ENCODE measurements at regions of chr16 and their contacts with region 1.

Region 1: DNA sequence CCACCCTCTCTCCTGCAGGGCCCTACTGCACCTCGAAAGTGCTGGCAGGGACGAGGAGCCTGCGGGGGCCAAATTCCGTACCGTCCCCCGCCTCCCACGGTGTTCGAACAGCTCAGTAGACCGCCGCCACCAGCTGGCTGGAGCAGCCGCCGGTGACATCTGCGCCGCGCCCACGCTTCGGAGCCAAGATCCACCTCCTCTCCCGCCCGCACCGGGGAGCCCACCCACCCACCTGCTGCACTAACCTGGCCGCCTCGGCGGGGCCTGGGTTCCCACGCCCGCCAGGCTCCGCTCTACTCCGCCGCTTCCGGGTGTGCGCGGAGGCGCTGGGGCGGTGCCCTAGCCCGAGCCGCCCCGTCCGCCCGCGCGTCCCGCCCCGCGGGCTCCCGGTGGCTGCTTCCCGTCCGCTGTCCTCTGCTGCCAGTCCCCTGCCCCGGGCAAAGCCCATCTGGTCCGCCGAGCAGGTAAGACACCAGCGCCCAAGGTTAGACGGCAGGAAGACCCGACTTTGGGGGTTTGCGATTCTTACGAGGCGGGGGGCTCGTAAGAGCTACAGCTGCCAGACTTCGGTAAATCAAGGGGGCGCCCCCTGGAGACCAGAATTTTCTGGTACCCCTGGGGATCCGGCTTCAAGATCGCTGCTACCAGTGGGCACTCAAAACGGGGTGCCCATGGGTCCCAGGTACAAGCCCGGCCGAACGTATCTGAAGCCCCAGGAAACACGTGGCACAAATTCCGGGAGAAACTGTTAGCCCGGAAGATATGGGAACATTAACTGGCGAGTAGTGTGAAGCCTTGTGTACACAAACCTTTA is at the starts of genes FBXL8 and TRADD:
- DNase-seq: peak; percentile 91
- ATAC-seq: peak; percentile 66
- H3K4me3 Mint-ChIP-seq: peak within 1 kb of the TSS; percentile 93
- H3K27ac Mint-ChIP-seq: peak within 1 kb of the TSS; percentile 92
- H3K4me1 Mint-ChIP-seq: peaks cover 44% of the 10 kb centered on the region
- H3K27me3 Mint-ChIP-seq: peaks cover 23% of the 10 kb centered on the region
- total RNA-seq, gene FBXL8: 34.1 to 41.3 TPM
- total RNA-seq, gene TRADD: 77.3 to 81.7 TPM

Region 2: GRCh38 chr16:67028555-67029248 is 131.1 kb before region 1 on chr16 and contains the start of gene CBFB:
- POLR2A ChIA-PET with region 1: interaction called, 23 read pairs
- DNase-seq: peak; percentile 97
- ATAC-seq: peak; percentile 93
- H3K4me3 Mint-ChIP-seq: peak within 1 kb of the TSS; percentile 88
- H3K27ac Mint-ChIP-seq: peak within 1 kb of the TSS; percentile 92
- H3K4me1 Mint-ChIP-seq: peaks cover 44% of the 10 kb centered on the region
- H3K27me3 Mint-ChIP-seq: no peaks in the 10 kb centered on the region
- total RNA-seq, gene CBFB: 193 to 198 TPM

Region 3: DNA sequence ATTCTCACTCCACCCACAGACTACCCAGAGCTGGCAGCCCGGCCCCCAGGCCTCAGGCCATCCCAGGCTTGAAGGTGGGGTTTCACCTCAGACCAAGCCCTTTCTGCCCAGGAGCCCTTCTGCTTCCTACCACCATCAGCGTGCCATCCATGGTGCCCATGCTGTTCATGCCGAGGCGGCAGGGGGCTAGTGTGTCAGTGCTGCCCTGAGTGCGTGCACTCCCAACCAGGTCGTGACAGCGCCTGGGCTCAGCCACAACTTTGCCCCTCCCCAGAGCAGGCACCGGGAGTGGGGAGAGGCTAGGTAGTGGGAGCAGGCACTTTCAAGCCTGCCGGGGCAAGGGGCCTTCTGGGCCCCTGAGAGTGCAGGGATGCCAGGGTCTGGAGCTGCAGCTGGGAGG is 17.5 kb before region 1 on chr16:
- POLR2A ChIA-PET with region 1: no interaction called
- DNase-seq: no peak
- ATAC-seq: no peak
- H3K4me3 Mint-ChIP-seq: no peak overlapping the region
- H3K27ac Mint-ChIP-seq: no peak overlapping the region
- H3K4me1 Mint-ChIP-seq: no peaks in the 10 kb centered on the region
- H3K27me3 Mint-ChIP-seq: no peaks in the 10 kb centered on the region

Region 4: DNA sequence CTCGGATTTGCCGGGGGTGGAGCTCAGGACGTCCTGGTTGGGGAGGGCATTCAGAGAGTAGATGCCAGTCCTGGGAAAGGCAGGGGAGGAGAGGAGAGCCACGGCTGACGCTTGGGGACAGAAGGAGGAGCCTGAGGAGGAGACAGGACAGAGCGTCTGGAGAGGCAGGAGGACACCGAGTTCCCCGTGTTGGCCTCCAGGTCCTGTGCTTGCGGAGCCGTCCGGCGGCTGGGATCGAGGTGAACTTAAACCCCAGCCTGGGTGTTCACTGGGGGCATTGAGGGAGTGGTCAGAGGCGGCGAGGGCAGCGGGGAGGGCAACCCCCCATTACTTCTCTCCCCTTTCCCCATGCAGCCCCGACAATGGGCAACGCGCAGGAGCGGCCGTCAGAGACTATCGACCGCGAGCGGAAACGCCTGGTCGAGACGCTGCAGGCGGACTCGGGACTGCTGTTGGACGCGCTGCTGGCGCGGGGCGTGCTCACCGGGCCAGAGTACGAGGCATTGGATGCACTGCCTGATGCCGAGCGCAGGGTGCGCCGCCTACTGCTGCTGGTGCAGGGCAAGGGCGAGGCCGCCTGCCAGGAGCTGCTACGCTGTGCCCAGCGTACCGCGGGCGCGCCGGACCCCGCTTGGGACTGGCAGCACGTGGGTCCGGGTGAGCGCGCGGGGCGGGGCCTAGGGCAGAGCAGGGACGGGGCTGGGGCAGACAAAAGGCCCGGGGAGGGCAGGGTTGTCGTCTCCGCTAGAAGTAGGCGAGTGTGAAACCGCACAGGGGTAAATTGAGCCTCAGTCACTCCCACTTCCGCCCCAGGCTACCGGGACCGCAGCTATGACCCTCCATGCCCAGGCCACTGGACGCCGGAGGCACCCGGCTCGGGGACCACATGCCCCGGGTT is 14.3 kb after region 1 on chr16:
- POLR2A ChIA-PET with region 1: interaction called, 28 read pairs
- DNase-seq: peak; percentile 78
- ATAC-seq: peak; percentile 70
- H3K4me3 Mint-ChIP-seq: peak overlapping the region; percentile 90
- H3K27ac Mint-ChIP-seq: peak overlapping the region; percentile 72
- H3K4me1 Mint-ChIP-seq: peaks cover 39% of the 10 kb centered on the region
- H3K27me3 Mint-ChIP-seq: peaks cover 45% of the 10 kb centered on the region

Region 5: GRCh38 chr16:67183627-67184328 is 24.0 kb after region 1 on chr16 and contains the start of gene MATCAP1:
- POLR2A ChIA-PET with region 1: interaction called, 14 read pairs
- DNase-seq: peak; percentile 97
- ATAC-seq: peak; percentile 93
- H3K4me3 Mint-ChIP-seq: peak within 1 kb of the TSS; percentile 86
- H3K27ac Mint-ChIP-seq: no peak within 1 kb of the TSS
- H3K4me1 Mint-ChIP-seq: peaks cover 11% of the 10 kb centered on the region
- H3K27me3 Mint-ChIP-seq: peaks cover 14% of the 10 kb centered on the region
- total RNA-seq, gene MATCAP1: 57.4 to 59.1 TPM